GM10248 (cell line): ENCODE measurements at regions of chrX and their contacts with region 1.

Region 1: GRCh38 chrX:129737916-129738315 is 863 bp upstream of the XPNPEP2 start:
- DNase-seq: no peak
- CTCF ChIP-seq: no peak

Region 2: DNA sequence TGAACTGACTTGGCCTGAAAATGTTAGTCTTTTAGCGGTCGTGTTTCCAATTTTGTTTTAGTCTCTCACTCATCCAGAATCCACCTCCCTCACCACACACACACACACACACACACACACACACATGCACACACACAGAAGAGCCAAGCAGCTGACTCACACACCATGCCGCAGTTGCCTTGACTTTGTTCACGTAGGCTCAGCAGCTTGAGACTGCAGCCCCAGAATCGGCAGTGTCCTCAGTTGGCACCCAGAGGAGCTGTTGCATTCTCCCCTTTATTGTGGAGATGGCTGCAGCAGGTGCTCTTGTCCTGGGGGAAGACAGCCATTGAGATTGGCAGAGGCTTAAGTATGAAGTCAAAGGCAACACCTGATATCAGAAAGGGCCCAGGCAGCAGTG is 20.0 kb before region 1 on chrX:
- CTCF ChIA-PET with region 1: no interaction called
- POLR2A ChIA-PET with region 1: no interaction called
- DNase-seq: no peak
- CTCF ChIP-seq: no peak

Region 3: DNA sequence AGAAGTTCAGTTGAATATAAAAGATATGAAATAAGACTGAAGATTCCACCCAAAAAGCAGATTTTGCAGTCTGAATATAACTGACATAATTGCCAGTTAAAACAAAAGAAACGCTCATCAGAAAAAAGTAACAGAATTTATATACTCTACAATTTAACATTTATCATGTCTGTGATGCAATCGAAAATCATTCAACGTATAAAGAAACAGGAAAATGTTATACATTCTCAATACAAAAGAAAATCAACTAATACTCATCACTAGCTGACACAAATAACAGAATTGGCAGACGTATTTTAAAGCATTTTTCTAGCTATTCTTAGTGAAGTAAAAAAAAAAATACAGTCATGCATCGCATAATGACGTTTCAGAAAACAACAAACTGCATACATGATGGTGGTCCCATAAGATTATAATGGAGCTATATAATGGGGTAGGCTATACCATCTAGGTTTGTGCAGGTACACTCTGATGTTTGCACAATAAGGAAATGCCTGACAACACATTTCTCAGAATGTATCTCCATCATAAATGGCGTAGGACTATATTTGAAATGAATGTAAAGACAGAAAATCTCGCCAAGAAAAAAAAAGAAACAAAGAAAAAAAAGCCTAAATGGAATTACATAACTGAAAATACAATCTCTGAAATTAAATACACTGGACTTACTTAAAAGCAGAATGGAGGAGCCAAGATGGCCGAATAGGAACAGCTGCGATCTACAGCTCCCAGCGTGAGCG is 1840.3 kb after region 1 on chrX:
- CTCF ChIA-PET with region 1: no interaction called
- POLR2A ChIA-PET with region 1: interaction called, 14 read pairs
- DNase-seq: no peak
- CTCF ChIP-seq: no peak